ENCODE measurements at regions of chr17 and their contacts with region 1.

Region 1: DNA sequence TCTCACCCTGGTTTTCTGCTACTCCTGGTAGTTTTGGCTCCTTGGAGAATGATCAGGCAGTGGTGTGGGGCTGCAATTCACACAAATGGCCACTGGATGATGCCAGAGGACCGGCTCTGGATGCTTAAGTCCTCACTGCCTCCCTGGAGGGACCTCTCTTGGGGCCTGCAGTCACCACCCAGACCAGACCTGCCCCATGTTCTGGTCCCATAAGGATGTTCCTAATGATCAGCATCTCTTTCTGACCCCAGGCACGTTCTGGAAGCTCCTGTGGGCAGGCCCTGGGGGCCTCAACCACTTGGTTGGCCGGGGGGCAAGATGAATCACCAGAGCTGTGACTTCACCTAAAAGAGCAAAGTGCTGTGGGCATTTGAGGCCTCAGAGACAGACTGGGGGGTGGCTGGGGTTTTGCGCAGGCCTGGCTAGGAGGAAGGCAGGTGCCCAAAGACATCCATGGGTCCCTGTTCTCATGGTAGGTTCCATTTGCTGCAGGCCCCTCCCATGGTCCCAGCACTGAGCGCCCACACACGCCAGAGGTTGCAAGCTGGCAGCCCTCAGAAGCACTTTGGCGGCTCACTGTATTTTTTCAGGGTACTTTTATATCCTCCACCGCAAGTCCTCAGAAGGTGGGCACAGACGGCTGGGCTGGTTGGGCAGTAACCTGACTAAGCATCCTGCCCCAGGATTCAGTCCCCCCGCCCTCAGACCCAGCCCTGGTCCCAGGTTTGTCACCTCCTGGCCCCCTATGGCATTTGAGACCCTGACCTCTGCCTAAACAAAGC is 53.2 kb downstream of the NT5M start:
- DNase-seq: peak; percentile 92

Region 2: DNA sequence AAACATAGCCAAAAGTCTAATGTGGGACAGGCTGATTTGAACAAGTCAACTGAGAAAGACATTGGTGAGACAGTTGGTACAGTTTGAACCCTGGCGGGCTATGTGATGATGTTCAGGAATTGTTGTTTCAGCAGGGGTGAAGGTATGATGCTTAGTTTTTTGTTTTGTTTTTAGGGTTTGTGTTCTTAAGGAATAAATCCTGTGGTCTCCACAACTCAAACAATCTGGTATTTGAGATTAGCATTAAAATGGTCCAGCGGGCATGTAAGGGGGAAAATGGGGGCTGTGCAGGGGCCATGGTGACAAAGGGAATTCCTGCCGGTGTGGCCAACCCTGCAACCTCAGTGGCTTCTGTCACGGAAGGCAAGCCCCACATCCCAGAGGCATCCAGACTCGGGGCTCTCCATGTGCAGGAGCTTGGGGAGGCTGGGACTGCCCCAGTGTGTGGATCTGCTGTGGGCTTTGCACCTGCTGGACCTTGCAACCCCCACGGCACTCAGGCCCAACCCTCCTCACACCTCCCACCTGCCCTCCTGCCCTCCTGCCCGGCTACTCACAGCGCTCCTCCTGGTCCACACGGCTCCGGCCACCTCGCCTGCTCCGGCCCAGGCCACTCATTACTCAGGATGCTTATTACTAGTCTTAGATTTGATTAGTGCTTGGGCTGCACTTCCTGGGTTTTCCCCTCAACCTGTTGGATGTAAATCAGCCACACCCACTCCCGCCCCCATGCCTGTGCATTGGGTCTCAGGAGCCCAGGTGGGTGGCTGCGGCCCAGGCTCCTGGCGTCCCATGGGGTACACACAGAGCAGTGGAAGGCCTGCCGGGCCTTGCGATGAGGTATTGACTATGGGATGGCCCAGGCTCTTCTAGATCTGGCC is 384.6 kb before region 1 on chr17 and contains the start of gene TNFRSF13B:
- in situ Hi-C with region 1: no loop called
- DNase-seq: no peak

Region 3: GRCh38 chr17:17568749-17569195 is 212.4 kb after region 1 on chr17:
- in situ Hi-C with region 1: loop called (anchors 25 kb)
- DNase-seq: peak; percentile 58

Region 4: GRCh38 chr17:17641621-17642409 is 285.5 kb after region 1 on chr17:
- in situ Hi-C with region 1: loop called (anchors 25 kb)
- DNase-seq: peak; percentile 75

Measured in KBM-7 (cell line).